ENCODE measurements at regions of chr10 and their contacts with region 1.

Region 1: DNA sequence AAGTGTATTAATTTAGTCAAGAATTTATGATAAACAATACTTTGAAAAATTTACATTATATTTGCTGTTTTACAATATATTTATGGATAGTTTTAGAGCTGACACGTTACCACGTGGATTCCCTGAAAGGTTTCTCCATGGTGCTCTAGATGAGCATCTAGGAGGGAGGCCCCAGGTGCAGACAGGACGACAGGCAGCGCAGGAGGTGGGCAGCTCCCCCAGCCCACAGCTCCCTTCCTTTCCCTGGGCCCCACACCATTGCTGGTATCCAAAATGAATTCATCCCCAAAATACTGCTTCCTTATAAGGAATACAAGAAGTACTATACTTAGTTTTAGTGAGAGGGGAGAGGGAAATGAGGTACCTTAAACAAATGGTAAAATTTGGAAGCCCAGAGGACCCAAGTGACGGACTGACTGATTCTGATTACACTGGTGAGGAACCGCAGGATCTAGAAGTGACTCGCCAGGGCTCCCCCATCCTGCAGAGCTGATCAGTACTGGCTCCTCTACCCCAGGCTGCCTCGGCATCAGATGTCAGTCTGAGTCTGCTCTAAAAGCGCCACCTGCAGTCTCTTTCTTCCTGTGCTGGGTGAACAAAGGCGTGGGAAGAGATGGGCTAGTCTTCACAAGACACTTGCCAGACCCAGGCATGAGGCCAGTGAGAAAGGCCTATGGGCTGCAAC is 89.2 kb downstream of the DLG5 start:
- DNase-seq: peak; percentile 80
- H3K4me3 ChIP-seq: no peak overlapping the region
- H3K27ac ChIP-seq: peak overlapping the region in 4 of 8 donors; percentile 78 to 83 (median 81)
- H3K4me1 ChIP-seq: peaks cover 0 to 26% (median 16%) of the 10 kb centered on the region in 6 donors
- H3K27me3 ChIP-seq: no peaks in the 10 kb centered on the region
- CTCF ChIP-seq: peak in 3 of 11 experiments; percentile 28 to 38 (median 30)
- POLR2A ChIP-seq: no peak

Region 2: DNA sequence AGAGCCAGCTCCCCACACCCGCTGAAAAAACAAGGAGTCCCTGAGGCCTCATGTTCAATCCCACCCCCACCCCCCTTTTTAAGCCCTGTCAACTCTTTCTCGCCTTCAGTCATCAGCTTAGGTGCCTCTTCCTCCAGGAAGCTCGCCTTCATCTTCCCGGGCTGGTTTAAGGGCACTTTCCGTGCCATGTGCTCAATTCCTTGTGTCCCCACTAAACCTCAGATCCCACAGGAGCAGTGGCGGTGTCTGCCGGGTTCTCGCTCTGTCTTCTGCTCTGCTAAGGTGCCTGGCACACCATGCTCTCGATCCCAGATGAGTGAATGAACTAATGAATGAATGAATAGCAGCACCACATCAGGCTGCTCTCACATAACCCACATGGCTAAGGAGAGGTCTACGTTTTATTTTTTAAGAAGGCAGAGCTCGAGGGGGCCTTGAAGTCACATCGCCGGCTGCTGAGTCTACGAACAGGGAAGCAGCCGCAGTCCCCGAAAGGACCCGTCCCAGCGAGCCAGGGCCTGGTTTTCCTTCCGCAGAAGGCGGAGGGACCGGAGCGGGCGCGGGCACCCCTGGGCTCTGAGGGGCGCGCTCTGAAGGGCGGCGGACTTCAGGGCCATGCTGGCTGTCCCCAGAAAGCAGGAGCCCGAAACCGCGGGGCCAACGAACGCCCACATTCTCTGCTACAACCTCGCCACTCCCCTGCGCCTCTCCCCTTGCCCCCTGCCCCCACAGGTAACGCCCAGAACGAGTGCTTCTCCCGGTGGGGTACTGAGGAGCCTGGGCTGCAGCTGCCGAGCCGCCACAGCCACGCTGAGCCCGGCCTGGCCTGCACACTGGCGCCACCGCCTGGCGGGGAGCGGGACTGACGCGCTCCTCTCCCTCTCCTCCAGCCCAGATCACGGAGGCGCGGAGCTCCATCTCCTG is 126.4 kb before region 1 on chr10:
- intact Hi-C with region 1: loop called (anchors 10 kb)
- DNase-seq: peak; percentile 93
- H3K4me3 ChIP-seq: peak overlapping the region; percentile 11 to 66 (median 33)
- H3K27ac ChIP-seq: no peak overlapping the region
- H3K4me1 ChIP-seq: peaks cover 0 to 15% (median 12%) of the 10 kb centered on the region in 6 donors
- H3K27me3 ChIP-seq: peaks cover 0 to 68% (median 27%) of the 10 kb centered on the region in 7 donors
- CTCF ChIP-seq: peak; percentile 65 to 96 (median 92)
- POLR2A ChIP-seq: no peak

Region 3: DNA sequence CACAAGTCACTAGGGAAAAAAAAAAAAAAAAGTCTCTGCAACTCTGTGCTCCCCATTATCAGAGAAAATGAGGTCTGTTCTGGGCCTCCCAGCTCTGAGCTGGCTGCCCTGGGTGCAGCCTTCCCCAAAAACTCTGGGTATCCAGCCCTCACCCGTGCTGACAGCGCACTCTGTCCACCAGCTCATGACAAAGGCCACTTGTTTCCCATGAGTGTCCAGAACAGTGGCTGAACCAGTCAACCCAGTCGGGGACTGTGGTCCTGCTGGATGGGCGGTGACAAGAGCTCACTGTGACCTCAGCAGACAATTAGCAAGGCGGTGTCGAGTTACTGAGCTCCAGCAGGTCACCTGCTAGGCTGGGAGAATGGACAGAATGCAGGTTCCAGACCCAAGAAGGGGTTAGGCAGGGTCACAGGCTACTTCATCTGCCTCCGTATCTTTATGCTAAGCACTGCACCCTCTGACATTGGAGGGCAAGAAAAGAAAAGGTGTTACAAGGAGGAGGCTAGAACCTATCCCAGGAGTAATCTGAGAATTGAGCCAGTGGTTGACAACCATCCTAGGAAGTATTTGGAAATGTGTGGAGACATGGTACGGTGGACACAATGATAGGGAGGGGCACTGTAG is 52.0 kb after region 1 on chr10:
- intact Hi-C with region 1: no loop called
- DNase-seq: no peak
- H3K4me3 ChIP-seq: no peak overlapping the region
- H3K27ac ChIP-seq: no peak overlapping the region
- H3K4me1 ChIP-seq: peaks cover 0 to 19% (median 10%) of the 10 kb centered on the region in 6 donors
- H3K27me3 ChIP-seq: no peaks in the 10 kb centered on the region
- CTCF ChIP-seq: no peak
- POLR2A ChIP-seq: no peak

Measured in spleen (tissue), 13 donors.